Panc1 (cell line): ENCODE measurements at regions of chr12 and their contacts with region 1.

Region 1: GRCh38 chr12:63420206-63420644 is 248.1 kb downstream of the DPY19L2 start:
- DNase-seq: peak; percentile 36
- ATAC-seq: peak; percentile 91
- H3K4me3 ChIP-seq: no peak overlapping the region
- H3K27ac ChIP-seq: no peak overlapping the region
- H3K4me1 ChIP-seq: no peaks in the 10 kb centered on the region
- H3K27me3 ChIP-seq: peaks cover 2% of the 10 kb centered on the region; the same call in 1 of the 2 replicates
- CTCF ChIP-seq: peak; percentile 82

Region 2: DNA sequence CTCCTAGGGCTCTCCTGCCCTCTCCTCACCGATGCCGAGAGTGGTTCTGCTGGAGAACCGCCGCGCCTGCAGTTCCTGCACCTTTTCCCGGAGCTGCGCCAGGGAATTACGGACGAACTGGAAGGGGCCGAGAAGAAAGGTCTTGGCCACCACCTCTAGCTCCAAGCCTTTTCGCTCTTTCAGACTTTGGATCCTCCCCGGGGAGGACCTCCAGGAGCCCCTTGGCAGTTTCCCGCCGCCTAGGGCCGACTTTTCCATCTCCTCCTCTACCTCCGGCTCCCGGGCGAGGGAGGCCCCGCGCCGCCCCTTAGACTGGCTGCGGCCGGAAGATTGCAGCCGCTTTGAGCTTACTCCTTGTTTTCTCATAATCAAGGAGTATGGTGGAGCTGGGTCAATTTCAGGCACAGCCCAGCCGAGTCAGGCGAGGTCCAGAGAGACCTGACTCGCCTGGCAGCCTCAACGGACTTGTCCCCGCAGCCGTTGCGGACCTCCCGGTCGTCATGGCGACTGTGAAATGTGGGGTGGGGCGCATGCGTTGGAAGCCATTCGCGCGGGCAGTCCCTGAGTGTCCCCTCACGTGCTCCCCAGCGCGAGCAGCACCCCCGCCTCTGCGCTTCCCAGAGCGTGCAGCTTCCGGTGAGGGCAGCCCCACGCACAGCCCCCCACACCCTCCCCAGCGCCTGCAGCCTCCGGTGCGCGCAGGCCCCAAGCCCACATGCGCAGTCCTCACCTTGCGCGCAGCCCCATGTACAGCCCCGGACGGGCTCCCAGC is 248.0 kb after region 1 on chr12 and contains the start of gene DPY19L2:
- CTCF ChIA-PET with region 1: no interaction called
- POLR2A ChIA-PET with region 1: no interaction called
- in situ Hi-C with region 1: no loop called
- intact Hi-C with region 1: loop called (anchors 5 kb)
- DNase-seq: no peak
- ATAC-seq: peak; percentile 97
- H3K4me3 ChIP-seq: peak within 1 kb of the TSS; percentile 73 to 76
- H3K27ac ChIP-seq: peak within 1 kb of the TSS; percentile 85
- H3K4me1 ChIP-seq: no peaks in the 10 kb centered on the region
- H3K27me3 ChIP-seq: no peaks in the 10 kb centered on the region
- CTCF ChIP-seq: no peak
- total RNA-seq, gene DPY19L2: 6.6 TPM

Region 3: DNA sequence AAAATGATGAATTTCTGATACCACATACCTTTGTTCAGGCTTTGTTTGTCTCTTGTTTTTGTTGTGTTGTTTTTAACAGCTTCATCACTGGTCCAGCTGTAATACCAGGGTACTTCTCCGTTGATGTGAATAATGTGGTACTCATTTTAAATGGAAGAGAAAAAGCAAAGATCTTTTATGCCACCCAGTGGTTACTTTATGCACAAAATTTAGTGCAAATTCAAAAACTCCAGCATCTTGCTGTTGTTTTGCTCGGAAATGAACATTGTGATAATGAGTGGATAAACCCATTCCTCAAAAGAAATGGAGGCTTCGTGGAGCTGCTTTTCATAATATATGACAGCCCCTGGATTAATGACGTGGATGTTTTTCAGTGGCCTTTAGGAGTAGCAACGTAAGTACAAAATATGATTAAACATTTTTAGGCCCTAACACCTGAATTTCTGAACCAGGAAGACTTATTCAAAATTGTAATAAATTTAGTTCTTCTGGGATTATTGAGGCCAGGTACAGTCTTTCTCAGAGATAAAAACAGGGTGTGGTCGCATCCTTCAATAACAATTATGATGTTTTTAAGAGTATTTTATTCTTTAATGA is 381.9 kb after region 1 on chr12:
- CTCF ChIA-PET with region 1: no interaction called
- POLR2A ChIA-PET with region 1: no interaction called
- in situ Hi-C with region 1: no loop called
- intact Hi-C with region 1: loop called (anchors 5 kb)
- DNase-seq: no peak
- ATAC-seq: peak; percentile 72; the same call in 1 of the 2 replicates
- H3K4me3 ChIP-seq: no peak overlapping the region
- H3K27ac ChIP-seq: no peak overlapping the region
- H3K4me1 ChIP-seq: no peaks in the 10 kb centered on the region
- H3K27me3 ChIP-seq: no peaks in the 10 kb centered on the region
- CTCF ChIP-seq: peak; percentile 71; the same call in 1 of the 2 replicates